ENCODE measurements at regions of chr7 and their contacts with region 1.

Region 1: GRCh38 chr7:50317221-50317678 is 12.7 kb downstream of the IKZF1 start:
- DNase-seq: no peak
- H3K4me3 ChIP-seq: peak overlapping the region in 1 of 8 donors; percentile 85
- H3K27ac ChIP-seq: peak overlapping the region; percentile 86 to 98 (median 94)
- H3K4me1 ChIP-seq: peaks cover 29 to 100% (median 98%) of the 10 kb centered on the region in 6 donors
- H3K27me3 ChIP-seq: no peaks in the 10 kb centered on the region
- CTCF ChIP-seq: peak in 4 of 11 experiments; percentile 9 to 36 (median 16)
- POLR2A ChIP-seq: no peak

Region 2: DNA sequence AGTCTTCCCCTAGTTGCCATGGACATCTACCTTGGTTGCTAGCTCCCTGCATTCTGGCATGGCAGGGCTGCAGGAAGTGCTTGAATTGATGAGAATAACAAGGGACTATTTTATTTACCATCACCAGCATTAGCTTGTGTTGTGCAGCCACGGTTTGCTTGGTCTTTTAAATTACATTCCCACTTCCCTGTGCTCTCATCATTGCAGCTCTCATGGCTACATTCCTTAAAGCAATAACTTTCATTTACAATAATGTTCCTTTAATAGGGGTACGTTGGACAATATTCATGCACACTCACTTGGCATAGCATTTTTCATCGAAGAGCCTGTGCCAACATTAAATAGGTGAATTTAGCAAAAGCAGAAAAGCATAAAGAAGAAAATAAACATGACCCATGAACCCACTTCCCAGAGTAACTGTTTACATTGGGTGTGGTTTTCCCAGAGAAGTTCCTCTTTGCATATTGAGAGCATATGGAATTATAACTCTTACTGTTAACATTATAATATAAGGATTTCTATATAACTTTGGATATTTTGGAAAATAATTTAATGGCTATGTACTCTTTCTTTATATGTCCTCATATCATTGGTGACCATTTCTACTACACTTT is 657.0 kb before region 1 on chr7:
- intact Hi-C with region 1: no loop called
- DNase-seq: no peak
- H3K4me3 ChIP-seq: no peak overlapping the region
- H3K27ac ChIP-seq: no peak overlapping the region
- H3K4me1 ChIP-seq: no peaks in the 10 kb centered on the region
- H3K27me3 ChIP-seq: no peaks in the 10 kb centered on the region
- CTCF ChIP-seq: no peak
- POLR2A ChIP-seq: no peak

Region 3: GRCh38 chr7:50281680-50282445 is 35.4 kb before region 1 on chr7:
- intact Hi-C with region 1: no loop called
- DNase-seq: peak; percentile 76
- H3K4me3 ChIP-seq: peak overlapping the region in 3 of 8 donors; percentile 9 to 53 (median 11)
- H3K27ac ChIP-seq: peak overlapping the region; percentile 16 to 88 (median 82)
- H3K4me1 ChIP-seq: peaks cover 11 to 67% (median 55%) of the 10 kb centered on the region in 6 donors
- H3K27me3 ChIP-seq: no peaks in the 10 kb centered on the region
- CTCF ChIP-seq: no peak
- POLR2A ChIP-seq: peak in 1 of 3 donors; percentile 24

Region 4: GRCh38 chr7:50369143-50370026 is 52.1 kb after region 1 on chr7:
- intact Hi-C with region 1: loop called (anchors 10 kb)
- DNase-seq: no peak
- H3K4me3 ChIP-seq: no peak overlapping the region
- H3K27ac ChIP-seq: peak overlapping the region in 5 of 8 donors; percentile 36 to 92 (median 84)
- H3K4me1 ChIP-seq: peaks cover 5 to 100% (median 55%) of the 10 kb centered on the region in 6 donors
- H3K27me3 ChIP-seq: no peaks in the 10 kb centered on the region
- CTCF ChIP-seq: peak; percentile 50 to 89 (median 82)
- POLR2A ChIP-seq: no peak

Measured in spleen (tissue), 13 donors.